ENCODE measurements at regions of chr1 and their contacts with region 1.

Region 1: GRCh38 chr1:77832901-77833300 is 53.5 kb downstream of the MIGA1 start:
- DNase-seq: no peak
- H3K4me3 ChIP-seq: no peak overlapping the region
- H3K27ac ChIP-seq: peak overlapping the region; percentile 90 to 92 (median 90)
- H3K4me1 ChIP-seq: peaks cover 41 to 91% (median 83%) of the 10 kb centered on the region in 4 donors
- H3K27me3 ChIP-seq: no peaks in the 10 kb centered on the region
- CTCF ChIP-seq: no peak
- EP300 ChIP-seq: peak; percentile 44
- POLR2A ChIP-seq: no peak

Region 2: GRCh38 chr1:77888081-77888780 is 55.3 kb after region 1 on chr1 and contains the start of gene NEXN:
- intact Hi-C with region 1: loop called (anchors 2 kb)
- DNase-seq: peak; percentile 96
- H3K4me3 ChIP-seq: peak within 1 kb of the TSS; percentile 79 to 98 (median 85)
- H3K27ac ChIP-seq: peak within 1 kb of the TSS; percentile 92 to 98 (median 97)
- H3K4me1 ChIP-seq: peaks cover 0 to 41% (median 33%) of the 10 kb centered on the region in 4 donors
- H3K27me3 ChIP-seq: no peaks in the 10 kb centered on the region
- CTCF ChIP-seq: peak in 2 of 3 experiments; percentile 2 to 14
- EP300 ChIP-seq: no peak
- POLR2A ChIP-seq: peak; percentile 38
- total RNA-seq, gene NEXN: 153 to 272 (median 240) TPM